ENCODE measurements at regions of chr6 and their contacts with region 1.

Region 1: GRCh38 chr6:26473758-26474438 is 16.1 kb downstream of the BTN2A1 start:
- DNase-seq: peak; percentile 94
- H3K4me3 Mint-ChIP-seq: peak overlapping the region; percentile 92
- H3K27ac Mint-ChIP-seq: peak overlapping the region; percentile 99
- H3K4me1 Mint-ChIP-seq: peaks cover 21% of the 10 kb centered on the region
- H3K27me3 Mint-ChIP-seq: no peaks in the 10 kb centered on the region
- CTCF ChIP-seq: no peak

Region 2: GRCh38 chr6:26394289-26394688 is 79.6 kb before region 1 on chr6:
- CTCF ChIA-PET with region 1: no interaction called
- POLR2A ChIA-PET with region 1: no interaction called
- intact Hi-C with region 1: no loop called
- DNase-seq: peak; percentile 94
- H3K4me3 Mint-ChIP-seq: no peak overlapping the region
- H3K27ac Mint-ChIP-seq: no peak overlapping the region
- H3K4me1 Mint-ChIP-seq: peaks cover 8% of the 10 kb centered on the region
- H3K27me3 Mint-ChIP-seq: no peaks in the 10 kb centered on the region
- CTCF ChIP-seq: no peak

Region 3: GRCh38 chr6:26497610-26498009 is 23.7 kb after region 1 on chr6:
- CTCF ChIA-PET with region 1: no interaction called
- POLR2A ChIA-PET with region 1: no interaction called
- intact Hi-C with region 1: no loop called
- DNase-seq: no peak
- H3K4me3 Mint-ChIP-seq: no peak overlapping the region
- H3K27ac Mint-ChIP-seq: no peak overlapping the region
- H3K4me1 Mint-ChIP-seq: no peaks in the 10 kb centered on the region
- H3K27me3 Mint-ChIP-seq: no peaks in the 10 kb centered on the region
- CTCF ChIP-seq: no peak

Region 4: GRCh38 chr6:26520853-26521599 is 47.1 kb after region 1 on chr6:
- CTCF ChIA-PET with region 1: no interaction called
- POLR2A ChIA-PET with region 1: interaction called, 7 read pairs
- intact Hi-C with region 1: loop called (anchors 2 kb)
- DNase-seq: peak; percentile 82
- H3K4me3 Mint-ChIP-seq: peak overlapping the region; percentile 66
- H3K27ac Mint-ChIP-seq: peak overlapping the region; percentile 17
- H3K4me1 Mint-ChIP-seq: peaks cover 9% of the 10 kb centered on the region
- H3K27me3 Mint-ChIP-seq: no peaks in the 10 kb centered on the region
- CTCF ChIP-seq: no peak

Measured in MCF 10A (cell line).